ENCODE measurements at regions of chr1 and their contacts with region 1.

Region 1: GRCh38 chr1:160726498-160727315 is 12.3 kb upstream of the SLAMF7 start:
- DNase-seq: no peak
- ATAC-seq: peak; percentile 74
- H3K4me3 Mint-ChIP-seq: no peak overlapping the region
- H3K27ac Mint-ChIP-seq: no peak overlapping the region
- H3K4me1 Mint-ChIP-seq: peaks cover 22% of the 10 kb centered on the region
- H3K27me3 Mint-ChIP-seq: no peaks in the 10 kb centered on the region

Region 2: GRCh38 chr1:160681067-160681890 is 45.4 kb before region 1 on chr1:
- POLR2A ChIA-PET with region 1: interaction called, 37 read pairs
- DNase-seq: peak; percentile 90
- ATAC-seq: peak; percentile 75
- H3K4me3 Mint-ChIP-seq: peak overlapping the region; percentile 76
- H3K27ac Mint-ChIP-seq: peak overlapping the region; percentile 88
- H3K4me1 Mint-ChIP-seq: peaks cover 73% of the 10 kb centered on the region
- H3K27me3 Mint-ChIP-seq: no peaks in the 10 kb centered on the region

Region 3: GRCh38 chr1:160711602-160712311 is 14.9 kb before region 1 on chr1 and contains the start of gene CD48:
- POLR2A ChIA-PET with region 1: interaction called, 36 read pairs
- DNase-seq: peak; percentile 53
- ATAC-seq: peak; percentile 38
- H3K4me3 Mint-ChIP-seq: no peak within 1 kb of the TSS
- H3K27ac Mint-ChIP-seq: no peak within 1 kb of the TSS
- H3K4me1 Mint-ChIP-seq: peaks cover 30% of the 10 kb centered on the region
- H3K27me3 Mint-ChIP-seq: no peaks in the 10 kb centered on the region
- total RNA-seq, gene CD48: 379 to 386 TPM

Region 4: DNA sequence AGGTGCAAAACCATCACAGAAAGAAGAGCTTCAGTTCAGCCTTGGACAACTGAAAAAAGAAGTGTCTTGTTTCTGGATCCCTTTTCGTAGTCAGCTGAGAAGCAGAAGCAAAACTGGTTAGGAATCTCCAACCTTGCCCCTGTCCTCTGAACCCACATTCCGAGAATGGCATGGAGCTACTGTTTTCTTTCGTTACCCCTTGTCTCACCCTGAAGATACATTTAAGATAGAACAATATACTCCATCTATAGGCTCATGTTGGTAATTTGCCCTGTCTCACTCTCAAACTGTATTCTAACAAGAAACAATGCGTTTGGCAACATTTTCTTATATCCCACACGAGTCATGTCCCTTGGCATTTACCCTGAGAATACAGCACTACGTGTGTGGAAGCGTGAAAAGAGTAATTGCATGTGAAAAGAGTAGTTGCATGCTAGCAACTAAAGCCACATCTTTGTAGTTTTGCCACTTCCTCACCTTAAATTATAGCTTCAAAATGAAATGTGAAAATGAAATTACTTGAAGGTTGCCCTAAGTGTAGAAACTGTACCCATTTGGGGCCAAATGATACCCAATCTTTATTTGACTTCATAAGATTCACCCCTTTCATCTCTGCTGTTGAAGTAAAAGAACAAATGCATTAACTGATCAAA is 17.6 kb after region 1 on chr1:
- POLR2A ChIA-PET with region 1: interaction called, 11 read pairs
- DNase-seq: no peak
- ATAC-seq: peak; percentile 74
- H3K4me3 Mint-ChIP-seq: peak overlapping the region; percentile 79
- H3K27ac Mint-ChIP-seq: peak overlapping the region; percentile 85
- H3K4me1 Mint-ChIP-seq: peaks cover 88% of the 10 kb centered on the region
- H3K27me3 Mint-ChIP-seq: no peaks in the 10 kb centered on the region